ENCODE measurements at regions of chr4 and their contacts with region 1.

Region 1: GRCh38 chr4:153127760-153128494 is 76.3 kb upstream of the TRIM2 start:
- DNase-seq: peak; percentile 77 to 83 (median 82)
- H3K4me3 ChIP-seq: no peak overlapping the region
- H3K4me3 Mint-ChIP-seq: no peak overlapping the region
- H3K27ac ChIP-seq: no peak overlapping the region
- H3K27ac Mint-ChIP-seq: peak overlapping the region in 6 of 7 donors; percentile 8 to 75 (median 58)
- H3K4me1 ChIP-seq: peaks cover 6% of the 10 kb centered on the region
- H3K4me1 Mint-ChIP-seq: peaks cover 0 to 6% (median 2%) of the 10 kb centered on the region in 4 donors
- H3K27me3 ChIP-seq: no peaks in the 10 kb centered on the region
- H3K27me3 Mint-ChIP-seq: no peaks in the 10 kb centered on the region

Region 2: GRCh38 chr4:152408514-152409327 is 719.2 kb before region 1 on chr4:
- CTCF ChIA-PET with region 1: interaction called, 7 read pairs
- POLR2A ChIA-PET with region 1: no interaction called
- intact Hi-C with region 1: loop called (anchors 1 kb)
- DNase-seq: peak; percentile 28 to 44 (median 41)
- H3K4me3 ChIP-seq: no peak overlapping the region
- H3K4me3 Mint-ChIP-seq: no peak overlapping the region
- H3K27ac ChIP-seq: no peak overlapping the region
- H3K27ac Mint-ChIP-seq: peak overlapping the region in 5 of 7 donors; percentile 3 to 85 (median 23)
- H3K4me1 ChIP-seq: no peaks in the 10 kb centered on the region
- H3K4me1 Mint-ChIP-seq: peaks cover 18 to 23% (median 20%) of the 10 kb centered on the region in 4 donors
- H3K27me3 ChIP-seq: no peaks in the 10 kb centered on the region
- H3K27me3 Mint-ChIP-seq: no peaks in the 10 kb centered on the region

Region 3: GRCh38 chr4:152850377-152850776 is 277.6 kb before region 1 on chr4:
- CTCF ChIA-PET with region 1: interaction called, 58 read pairs
- POLR2A ChIA-PET with region 1: no interaction called
- intact Hi-C with region 1: loop called (anchors 1 kb)
- DNase-seq: no peak
- H3K4me3 ChIP-seq: no peak overlapping the region
- H3K4me3 Mint-ChIP-seq: peak overlapping the region in 1 of 8 donors; percentile 5
- H3K27ac ChIP-seq: no peak overlapping the region
- H3K27ac Mint-ChIP-seq: peak overlapping the region in 1 of 7 donors; percentile 40
- H3K4me1 ChIP-seq: peaks cover 10% of the 10 kb centered on the region
- H3K4me1 Mint-ChIP-seq: peaks cover 15 to 20% (median 17%) of the 10 kb centered on the region in 4 donors
- H3K27me3 ChIP-seq: no peaks in the 10 kb centered on the region
- H3K27me3 Mint-ChIP-seq: no peaks in the 10 kb centered on the region

Region 4: DNA sequence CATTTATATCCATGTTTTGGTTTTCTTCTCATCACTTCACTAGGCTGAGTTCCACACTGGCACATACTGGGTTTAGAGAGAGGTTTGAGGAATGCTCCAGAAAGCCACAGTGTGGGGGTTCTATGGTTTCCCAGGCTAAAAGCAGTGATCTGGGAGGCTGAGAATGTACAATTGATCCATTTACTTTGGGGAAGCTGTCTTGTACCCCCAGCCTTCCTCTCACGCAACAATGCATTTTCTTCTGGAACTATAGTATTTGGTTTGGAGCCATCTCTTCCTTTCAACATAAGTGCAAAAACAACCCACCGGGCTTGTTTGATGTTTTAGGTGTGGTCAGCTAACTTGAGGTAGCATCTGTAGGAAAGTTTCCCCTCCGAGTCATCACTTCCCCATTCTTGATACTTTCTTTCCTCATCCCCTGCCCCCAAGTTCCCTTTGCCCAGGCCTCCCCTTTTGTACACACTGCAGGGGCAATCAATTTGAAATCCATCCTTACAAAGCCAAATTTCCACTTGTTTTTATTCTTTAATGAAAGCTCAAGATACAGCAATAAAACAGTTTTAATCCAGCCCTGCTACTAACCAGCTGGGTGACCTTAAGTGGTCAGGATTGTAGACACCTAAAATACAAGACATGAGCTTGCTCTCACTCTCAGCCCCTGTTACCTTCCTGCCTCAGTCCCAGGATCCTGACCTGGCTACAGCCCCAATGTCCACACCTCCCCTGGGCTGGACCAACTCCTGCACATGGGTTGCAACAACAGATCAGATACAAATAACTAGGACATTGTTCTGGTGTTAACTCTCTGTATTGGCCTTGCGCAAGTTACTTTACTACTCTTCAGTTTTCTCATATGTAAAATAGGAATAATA is 82.6 kb before region 1 on chr4:
- CTCF ChIA-PET with region 1: no interaction called
- POLR2A ChIA-PET with region 1: no interaction called
- intact Hi-C with region 1: no loop called
- DNase-seq: no peak
- H3K4me3 ChIP-seq: no peak overlapping the region
- H3K4me3 Mint-ChIP-seq: no peak overlapping the region
- H3K27ac ChIP-seq: no peak overlapping the region
- H3K27ac Mint-ChIP-seq: no peak overlapping the region
- H3K4me1 ChIP-seq: no peaks in the 10 kb centered on the region
- H3K4me1 Mint-ChIP-seq: peaks cover 0 to 2% (median 0%) of the 10 kb centered on the region in 4 donors
- H3K27me3 ChIP-seq: no peaks in the 10 kb centered on the region
- H3K27me3 Mint-ChIP-seq: peaks cover 6 to 15% of the 10 kb centered on the region in 2 donors

Region 5: DNA sequence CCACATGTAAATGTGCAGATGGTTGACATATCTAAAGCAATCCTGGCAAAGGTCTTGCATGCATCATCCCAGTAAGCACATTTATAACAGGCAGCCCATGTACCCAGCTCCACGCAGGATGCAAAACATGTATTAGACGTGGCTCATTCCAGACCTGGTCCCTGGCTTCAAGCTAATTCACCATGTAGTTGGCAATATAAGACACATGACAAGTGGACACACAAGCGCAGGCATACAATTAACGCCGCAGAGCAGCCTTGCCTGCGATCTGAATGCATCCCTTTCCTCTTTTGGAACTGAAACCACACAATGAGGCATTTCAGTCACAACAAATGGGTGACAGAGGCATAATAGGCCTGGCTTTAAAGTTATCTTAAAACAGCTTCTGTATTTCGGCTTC is 38.2 kb before region 1 on chr4:
- CTCF ChIA-PET with region 1: interaction called, 555 read pairs
- POLR2A ChIA-PET with region 1: interaction called, 50 read pairs
- intact Hi-C with region 1: no loop called
- DNase-seq: no peak
- H3K4me3 ChIP-seq: no peak overlapping the region
- H3K4me3 Mint-ChIP-seq: no peak overlapping the region
- H3K27ac ChIP-seq: no peak overlapping the region
- H3K27ac Mint-ChIP-seq: peak overlapping the region in 1 of 7 donors; percentile 1
- H3K4me1 ChIP-seq: peaks cover 17% of the 10 kb centered on the region
- H3K4me1 Mint-ChIP-seq: peaks cover 10 to 19% (median 16%) of the 10 kb centered on the region in 4 donors
- H3K27me3 ChIP-seq: no peaks in the 10 kb centered on the region
- H3K27me3 Mint-ChIP-seq: no peaks in the 10 kb centered on the region

Region 6: DNA sequence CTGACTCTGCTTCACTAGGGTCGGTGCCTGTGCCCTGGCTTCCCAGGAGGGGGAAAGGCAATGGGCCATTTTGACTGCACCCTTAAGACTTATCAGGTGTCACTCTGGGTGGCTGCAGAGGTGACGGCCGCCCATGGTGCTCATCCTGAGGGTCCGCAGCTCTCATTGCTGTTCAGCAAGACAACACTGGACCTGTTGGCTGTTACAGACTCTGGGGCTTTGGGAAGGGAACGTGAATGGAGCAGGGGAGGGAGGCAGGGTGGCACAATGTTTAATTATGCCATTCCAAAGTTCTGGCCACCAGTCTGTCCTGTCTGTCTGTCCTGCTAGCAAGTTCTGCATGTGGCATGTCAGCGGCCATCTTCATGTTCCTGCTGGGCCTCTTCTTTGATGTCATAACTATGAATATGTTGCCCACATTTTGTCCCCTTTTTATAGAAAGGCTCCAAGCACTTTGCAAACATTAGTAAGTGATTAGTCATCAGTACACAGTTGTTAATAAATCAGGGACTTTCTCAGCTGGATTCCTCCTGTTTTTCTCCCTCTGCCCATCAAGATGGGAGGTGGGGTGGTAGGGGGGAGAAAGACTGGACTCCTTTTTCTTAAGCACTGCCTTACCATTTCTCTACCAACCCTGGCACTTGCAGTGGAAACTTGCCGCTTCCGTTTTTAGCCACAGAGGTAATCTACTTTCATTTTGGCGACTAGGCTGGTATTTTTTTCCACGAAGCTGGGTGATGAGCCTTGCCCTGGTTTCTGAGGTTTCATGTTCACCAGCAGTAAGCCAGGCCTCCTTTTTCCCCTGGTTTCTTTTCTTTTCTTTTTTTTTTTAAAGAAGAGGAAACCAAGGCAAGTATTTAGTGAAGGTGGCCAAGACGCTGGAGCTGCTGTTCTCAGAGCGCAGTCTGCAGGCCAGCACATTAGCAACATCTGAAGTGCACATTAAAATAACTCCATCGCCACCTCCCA is 12.3 kb before region 1 on chr4:
- CTCF ChIA-PET with region 1: interaction called, 133 read pairs
- POLR2A ChIA-PET with region 1: interaction called, 31 read pairs
- intact Hi-C with region 1: loop called (anchors 1 kb)
- DNase-seq: peak; percentile 85 to 92 (median 89)
- H3K4me3 ChIP-seq: peak overlapping the region in 1 of 2 donors; percentile 37
- H3K4me3 Mint-ChIP-seq: peak overlapping the region in 1 of 8 donors; percentile 74
- H3K27ac ChIP-seq: peak overlapping the region; percentile 68
- H3K27ac Mint-ChIP-seq: no peak overlapping the region
- H3K4me1 ChIP-seq: peaks cover 62% of the 10 kb centered on the region
- H3K4me1 Mint-ChIP-seq: peaks cover 0 to 18% (median 9%) of the 10 kb centered on the region in 4 donors
- H3K27me3 ChIP-seq: no peaks in the 10 kb centered on the region
- H3K27me3 Mint-ChIP-seq: no peaks in the 10 kb centered on the region

Region 7: DNA sequence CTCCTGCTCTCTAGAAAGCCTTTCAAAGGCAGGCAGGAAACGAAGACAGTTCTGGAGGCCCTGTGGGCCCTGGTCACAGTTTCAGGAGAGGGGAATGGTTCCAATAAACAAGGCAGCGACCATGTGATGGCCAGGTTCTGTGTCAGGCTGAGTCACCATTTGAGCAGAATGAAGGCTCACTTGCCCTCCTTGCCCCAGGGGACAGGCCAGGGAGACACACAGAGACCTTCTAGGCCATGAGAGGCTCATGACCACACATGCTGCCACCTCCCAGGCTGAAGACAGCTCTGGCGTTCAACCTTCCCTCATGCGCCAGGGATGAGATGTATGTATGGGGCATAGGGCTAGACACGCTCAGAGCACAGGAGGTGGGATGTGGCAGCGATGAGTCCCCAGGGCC is 53.4 kb after region 1 on chr4:
- CTCF ChIA-PET with region 1: no interaction called
- POLR2A ChIA-PET with region 1: no interaction called
- intact Hi-C with region 1: no loop called
- DNase-seq: no peak
- H3K4me3 ChIP-seq: no peak overlapping the region
- H3K4me3 Mint-ChIP-seq: no peak overlapping the region
- H3K27ac ChIP-seq: no peak overlapping the region
- H3K27ac Mint-ChIP-seq: no peak overlapping the region
- H3K4me1 ChIP-seq: no peaks in the 10 kb centered on the region
- H3K4me1 Mint-ChIP-seq: peaks cover 0 to 17% (median under 1%) of the 10 kb centered on the region in 4 donors
- H3K27me3 ChIP-seq: no peaks in the 10 kb centered on the region
- H3K27me3 Mint-ChIP-seq: no peaks in the 10 kb centered on the region

Region 8: DNA sequence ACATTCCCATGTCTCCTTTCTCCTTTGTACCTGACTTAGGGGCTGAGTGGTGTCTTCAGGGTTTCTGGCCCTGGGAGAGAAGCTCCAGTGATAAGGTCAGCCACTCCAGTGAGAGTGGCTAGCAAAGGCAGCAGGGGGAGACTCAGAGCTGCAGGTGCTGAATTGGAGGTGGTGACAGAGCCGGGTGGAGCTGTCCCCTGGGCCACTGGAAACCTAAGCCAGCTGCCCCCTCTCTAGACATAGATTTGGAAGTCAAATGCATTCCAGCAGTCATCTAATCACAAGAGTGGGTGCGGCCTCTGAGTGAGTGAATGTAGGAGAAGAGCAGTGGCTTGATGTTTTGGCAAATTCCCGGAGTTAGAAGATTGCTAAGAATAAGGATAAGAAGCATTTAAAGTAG is 104.8 kb after region 1 on chr4:
- CTCF ChIA-PET with region 1: no interaction called
- POLR2A ChIA-PET with region 1: no interaction called
- intact Hi-C with region 1: no loop called
- DNase-seq: no peak
- H3K4me3 ChIP-seq: no peak overlapping the region
- H3K4me3 Mint-ChIP-seq: peak overlapping the region in 2 of 8 donors; percentile 2 to 3
- H3K27ac ChIP-seq: no peak overlapping the region
- H3K27ac Mint-ChIP-seq: peak overlapping the region in 2 of 7 donors; percentile 33 to 75
- H3K4me1 ChIP-seq: peaks cover 15% of the 10 kb centered on the region
- H3K4me1 Mint-ChIP-seq: peaks cover 23 to 54% (median 30%) of the 10 kb centered on the region in 4 donors
- H3K27me3 ChIP-seq: no peaks in the 10 kb centered on the region
- H3K27me3 Mint-ChIP-seq: peaks cover 2 to 3% of the 10 kb centered on the region in 2 donors

Region 9: GRCh38 chr4:153643406-153644383 is 515.8 kb after region 1 on chr4:
- CTCF ChIA-PET with region 1: interaction called, 14 read pairs
- POLR2A ChIA-PET with region 1: no interaction called
- intact Hi-C with region 1: no loop called
- DNase-seq: peak in 4 of 5 donors; percentile 54 to 65 (median 62)
- H3K4me3 ChIP-seq: no peak overlapping the region
- H3K4me3 Mint-ChIP-seq: peak overlapping the region in 3 of 8 donors; percentile 8 to 62 (median 35)
- H3K27ac ChIP-seq: no peak overlapping the region
- H3K27ac Mint-ChIP-seq: peak overlapping the region in 3 of 7 donors; percentile 19 to 93 (median 46)
- H3K4me1 ChIP-seq: peaks cover 6% of the 10 kb centered on the region
- H3K4me1 Mint-ChIP-seq: peaks cover 7 to 15% (median 10%) of the 10 kb centered on the region in 4 donors
- H3K27me3 ChIP-seq: no peaks in the 10 kb centered on the region
- H3K27me3 Mint-ChIP-seq: no peaks in the 10 kb centered on the region